ENCODE measurements at regions of chr16 and their contacts with region 1.

Region 1: DNA sequence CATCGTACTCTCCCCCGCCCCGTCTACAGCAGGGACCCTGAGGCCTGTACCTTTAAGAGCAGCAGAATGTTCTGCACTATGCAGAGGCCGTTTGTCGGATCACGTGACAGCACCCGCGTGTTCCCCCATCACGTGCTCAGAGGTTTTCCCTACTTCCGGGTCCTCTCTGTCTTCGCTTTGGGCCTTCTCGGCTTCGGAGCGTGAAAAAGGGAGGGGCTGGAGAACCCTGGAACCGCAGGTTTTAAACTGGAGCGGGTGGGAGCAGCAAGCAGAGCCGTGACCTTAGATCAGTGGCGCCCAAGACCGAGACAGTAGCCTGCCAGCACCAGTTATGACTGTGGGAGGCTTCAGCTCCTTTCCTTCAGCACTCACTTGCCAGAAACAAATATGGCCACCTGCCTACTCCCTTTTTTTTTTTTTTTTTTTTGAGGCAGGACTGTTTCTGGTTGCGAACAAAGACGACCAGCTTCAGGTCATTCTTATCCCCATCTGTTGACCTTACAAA is at the start of gene CLN3:
- DNase-seq: peak; percentile 90 to 96 (median 94)
- ATAC-seq: peak; percentile 97 to 99 (median 98)
- H3K4me3 ChIP-seq: peak within 1 kb of the TSS; percentile 61 to 99 (median 85)
- H3K27ac ChIP-seq: peak within 1 kb of the TSS; percentile 90 to 99 (median 97)
- H3K4me1 ChIP-seq: peaks cover 0 to 49% (median 9%) of the 10 kb centered on the region in 12 donors
- H3K27me3 ChIP-seq: no peaks in the 10 kb centered on the region
- CTCF ChIP-seq: no peak
- POLR2A ChIP-seq: peak in 1 of 2 donors; percentile 47
- total RNA-seq, gene CLN3: 9.6 to 23.9 (median 14.2) TPM

Region 2: GRCh38 chr16:28158136-28158535 is 333.9 kb before region 1 on chr16:
- intact Hi-C with region 1: no loop called
- DNase-seq: no peak
- ATAC-seq: peak; percentile 67 to 79 (median 72)
- H3K4me3 ChIP-seq: peak overlapping the region in 2 of 12 donors; percentile 20 to 27
- H3K27ac ChIP-seq: peak overlapping the region in 6 of 12 donors; percentile 10 to 90 (median 36)
- H3K4me1 ChIP-seq: peaks cover 0 to 50% (median 10%) of the 10 kb centered on the region in 12 donors
- H3K27me3 ChIP-seq: no peaks in the 10 kb centered on the region
- CTCF ChIP-seq: no peak
- POLR2A ChIP-seq: no peak

Region 3: DNA sequence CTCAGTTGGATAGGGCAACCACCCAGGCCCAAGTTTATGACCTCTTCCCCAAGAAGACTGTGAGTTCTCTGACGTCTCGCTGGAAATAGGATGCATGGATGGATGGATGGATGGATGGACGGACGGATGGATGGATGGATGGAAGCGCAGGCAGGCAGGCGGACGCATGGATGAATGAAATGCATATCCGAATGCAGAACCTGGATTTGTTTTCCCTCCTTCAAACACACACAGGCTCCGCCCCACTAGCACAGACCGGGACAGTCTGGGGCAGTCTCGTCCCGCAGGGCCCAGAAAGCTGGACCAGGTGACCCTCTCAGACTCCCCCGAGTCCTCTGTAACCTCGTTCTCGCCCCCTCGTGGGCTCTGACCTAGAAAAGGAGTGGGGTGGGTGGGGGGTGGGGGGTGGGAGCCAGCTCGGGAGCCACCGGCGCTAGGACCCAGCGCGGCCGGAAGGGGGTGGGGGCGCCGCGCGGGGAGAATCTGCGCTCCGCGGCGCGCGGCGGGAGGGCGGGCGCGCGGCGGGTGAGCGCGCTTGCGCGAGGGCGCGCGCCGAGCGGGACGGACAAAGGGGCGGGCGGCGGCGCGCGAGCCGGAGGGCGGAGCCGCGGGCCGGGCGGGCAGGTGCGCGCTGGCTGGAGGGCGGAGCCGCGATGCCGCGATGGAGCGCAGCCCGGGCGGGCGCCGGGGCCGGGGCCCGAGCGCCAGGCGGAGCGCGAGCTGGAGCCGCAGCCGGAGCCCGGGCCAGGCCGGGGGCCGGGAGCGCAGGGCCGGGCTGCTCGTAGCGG is 200.0 kb before region 1 on chr16 and contains the start of gene SBK1:
- intact Hi-C with region 1: loop called in 1 of 10 experiments (anchors 10 kb)
- DNase-seq: peak; percentile 50 to 84 (median 73)
- ATAC-seq: peak; percentile 30 to 95 (median 80)
- H3K4me3 ChIP-seq: peak within 1 kb of the TSS; percentile 34 to 69 (median 56)
- H3K27ac ChIP-seq: peak within 1 kb of the TSS in 5 of 12 donors; percentile 30 to 64 (median 45)
- H3K4me1 ChIP-seq: peaks cover 0 to 19% (median 9%) of the 10 kb centered on the region in 12 donors
- H3K27me3 ChIP-seq: peaks cover 0 to 14% (median 3%) of the 10 kb centered on the region in 9 donors
- CTCF ChIP-seq: no peak
- POLR2A ChIP-seq: no peak
- total RNA-seq, gene SBK1: 0.94 to 6.1 (median 2.4) TPM

Region 4: DNA sequence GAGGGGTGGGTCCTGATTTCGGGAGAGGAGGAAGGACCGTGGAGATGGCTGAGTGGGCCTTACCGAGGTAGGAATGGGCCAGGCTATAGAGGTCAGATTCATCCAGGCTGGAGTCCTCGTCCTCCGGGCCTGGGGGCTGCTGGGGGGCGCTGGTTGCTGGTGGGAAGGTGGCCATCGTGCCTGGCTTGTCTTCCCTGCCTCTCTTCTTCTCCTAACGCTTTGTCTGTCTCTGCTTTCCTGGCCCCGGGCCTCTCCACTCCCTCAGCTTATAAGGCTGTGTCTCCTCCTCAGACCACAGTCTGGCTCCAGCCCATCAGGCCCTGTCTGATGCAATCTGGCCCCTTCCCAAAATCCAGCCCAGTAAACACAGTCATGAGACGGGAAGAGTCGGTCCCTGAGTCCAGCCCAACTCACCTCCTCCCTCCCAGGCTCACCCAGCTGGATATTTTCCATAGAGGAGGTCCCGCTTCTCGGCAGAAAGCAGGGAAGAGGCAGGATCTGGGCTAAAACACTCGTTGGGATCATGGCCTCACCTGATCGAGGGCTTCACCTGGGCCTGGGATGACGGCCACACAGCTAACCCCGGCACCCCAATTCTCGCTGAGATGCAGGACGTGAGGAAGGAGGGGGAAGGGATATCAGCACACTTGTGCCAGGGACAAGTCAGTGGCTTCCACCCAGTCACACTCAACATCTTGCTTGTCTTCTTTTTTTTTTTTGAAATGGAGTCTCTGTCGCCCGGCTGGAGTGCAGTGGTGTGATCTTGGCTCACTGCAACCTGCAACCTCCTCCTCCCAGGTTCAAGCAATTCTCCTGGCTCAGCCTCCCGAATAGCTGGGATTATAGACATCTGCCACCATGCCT is 46.9 kb after region 1 on chr16 and contains the start of gene NUPR1:
- intact Hi-C with region 1: loop called in 4 of 10 experiments (anchors 2 to 5 kb)
- DNase-seq: peak; percentile 90 to 96 (median 95)
- ATAC-seq: peak; percentile 96 to 99 (median 98)
- H3K4me3 ChIP-seq: peak within 1 kb of the TSS; percentile 11 to 71 (median 58)
- H3K27ac ChIP-seq: peak within 1 kb of the TSS; percentile 82 to 98 (median 93)
- H3K4me1 ChIP-seq: peaks cover 0 to 54% (median 20%) of the 10 kb centered on the region in 12 donors
- H3K27me3 ChIP-seq: no peaks in the 10 kb centered on the region
- CTCF ChIP-seq: no peak
- POLR2A ChIP-seq: peak in 1 of 2 donors; percentile 85
- total RNA-seq, gene NUPR1: 5.7 to 43.8 (median 26.2) TPM

Region 5: GRCh38 chr16:28553776-28554633 is 62.0 kb after region 1 on chr16 and contains the start of gene SGF29:
- intact Hi-C with region 1: loop called in 7 of 10 experiments (anchors 1 to 10 kb)
- DNase-seq: peak; percentile 92 to 96 (median 94)
- ATAC-seq: peak; percentile 93 to 97 (median 96)
- H3K4me3 ChIP-seq: peak within 1 kb of the TSS; percentile 39 to 94 (median 70)
- H3K27ac ChIP-seq: peak within 1 kb of the TSS; percentile 93 to 100 (median 98)
- H3K4me1 ChIP-seq: peaks cover 0 to 37% (median 9%) of the 10 kb centered on the region in 12 donors
- H3K27me3 ChIP-seq: no peaks in the 10 kb centered on the region
- CTCF ChIP-seq: peak in 9 of 12 donors; percentile 19 to 64 (median 48)
- POLR2A ChIP-seq: peak in 1 of 2 donors; percentile 85
- total RNA-seq, gene SGF29: 11.1 to 27.9 (median 15.6) TPM

Region 6: DNA sequence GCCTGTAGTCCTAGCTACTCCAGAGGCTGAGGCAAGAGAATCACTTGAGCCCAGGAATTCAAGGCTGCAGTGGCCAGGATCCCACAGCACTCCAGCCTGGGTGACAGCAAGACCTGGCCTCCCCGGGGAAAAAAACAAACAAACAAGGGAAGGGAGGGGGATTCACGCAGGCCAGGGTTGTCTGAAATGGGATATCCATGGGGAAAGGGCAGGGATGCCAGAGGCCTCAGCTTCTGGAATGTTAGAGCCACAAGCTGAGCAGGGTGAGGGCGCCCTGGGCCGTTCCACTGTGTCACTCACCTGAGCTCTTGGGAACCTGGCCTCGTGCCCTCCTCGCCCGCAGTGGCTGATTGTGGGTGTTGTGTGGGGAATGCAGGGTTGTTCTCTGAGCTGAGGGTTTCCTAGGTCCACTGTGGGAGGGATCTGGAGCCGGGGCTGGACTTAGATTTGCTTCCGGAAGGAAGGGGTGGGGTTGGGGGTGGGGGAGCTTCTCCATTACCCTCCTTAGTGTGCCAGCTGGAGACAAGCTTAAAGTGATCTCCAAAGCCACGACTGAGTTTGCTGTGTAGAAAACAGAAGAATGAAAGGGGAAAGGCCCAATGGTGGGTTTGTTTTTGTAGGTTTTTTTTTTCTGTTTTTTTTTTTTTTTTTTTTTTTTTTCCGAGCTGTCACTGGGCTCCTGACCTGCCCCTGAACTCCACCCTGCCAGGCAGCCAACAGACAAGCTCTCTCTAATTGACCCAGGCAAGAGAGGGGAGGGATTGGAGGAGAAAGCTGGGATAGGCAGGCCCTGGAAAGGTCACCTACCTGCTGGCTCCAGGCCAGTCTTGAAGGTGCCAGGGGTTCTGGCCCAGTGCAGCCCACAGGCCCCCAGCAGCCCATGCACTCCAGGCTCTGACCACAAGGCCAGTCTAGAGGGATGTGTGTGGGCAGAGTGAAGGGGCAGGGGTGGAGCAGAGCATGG is 117.9 kb after region 1 on chr16 and contains the start of gene SULT1A1:
- intact Hi-C with region 1: loop called in 3 of 10 experiments (anchors 5 to 10 kb)
- DNase-seq: peak; percentile 60 to 77 (median 69)
- ATAC-seq: peak; percentile 49 to 86 (median 77)
- H3K4me3 ChIP-seq: peak within 1 kb of the TSS in 11 of 12 donors; percentile 17 to 59 (median 50)
- H3K27ac ChIP-seq: peak within 1 kb of the TSS in 11 of 12 donors; percentile 4 to 84 (median 64)
- H3K4me1 ChIP-seq: peaks cover 3 to 24% (median 14%) of the 10 kb centered on the region in 12 donors
- H3K27me3 ChIP-seq: no peaks in the 10 kb centered on the region
- CTCF ChIP-seq: no peak
- POLR2A ChIP-seq: no peak
- total RNA-seq, gene SULT1A1: 8.7 to 35.9 (median 20.6) TPM

Region 7: DNA sequence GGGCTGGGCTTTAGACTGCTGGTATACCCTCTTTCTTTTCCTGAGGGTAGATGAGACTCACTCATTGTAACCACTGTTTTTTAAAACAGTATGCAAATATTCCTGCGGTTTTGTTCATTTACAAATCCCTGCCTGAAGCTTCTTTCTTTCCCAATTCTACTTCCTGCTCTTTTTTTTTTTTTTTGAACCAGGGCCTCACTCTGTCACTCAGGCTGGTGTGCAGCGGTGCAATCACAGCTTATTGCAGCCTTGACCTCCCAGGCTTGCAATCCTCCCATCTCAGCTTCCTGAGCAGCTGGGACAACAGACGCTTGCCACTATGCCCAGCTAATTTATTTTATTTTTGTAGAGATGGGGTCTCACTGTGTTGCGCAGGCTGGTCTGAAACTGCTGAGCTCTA is 125.9 kb after region 1 on chr16:
- intact Hi-C with region 1: loop called in 1 of 10 experiments (anchors 5 kb)
- DNase-seq: no peak
- ATAC-seq: no peak
- H3K4me3 ChIP-seq: no peak overlapping the region
- H3K27ac ChIP-seq: no peak overlapping the region
- H3K4me1 ChIP-seq: peaks cover 0 to 5% (median 0%) of the 10 kb centered on the region in 12 donors
- H3K27me3 ChIP-seq: no peaks in the 10 kb centered on the region
- CTCF ChIP-seq: no peak
- POLR2A ChIP-seq: no peak